Endothelial cell of umbilical vein (primary cell): ENCODE measurements at regions of chr4 and their contacts with region 1.

Region 1: DNA sequence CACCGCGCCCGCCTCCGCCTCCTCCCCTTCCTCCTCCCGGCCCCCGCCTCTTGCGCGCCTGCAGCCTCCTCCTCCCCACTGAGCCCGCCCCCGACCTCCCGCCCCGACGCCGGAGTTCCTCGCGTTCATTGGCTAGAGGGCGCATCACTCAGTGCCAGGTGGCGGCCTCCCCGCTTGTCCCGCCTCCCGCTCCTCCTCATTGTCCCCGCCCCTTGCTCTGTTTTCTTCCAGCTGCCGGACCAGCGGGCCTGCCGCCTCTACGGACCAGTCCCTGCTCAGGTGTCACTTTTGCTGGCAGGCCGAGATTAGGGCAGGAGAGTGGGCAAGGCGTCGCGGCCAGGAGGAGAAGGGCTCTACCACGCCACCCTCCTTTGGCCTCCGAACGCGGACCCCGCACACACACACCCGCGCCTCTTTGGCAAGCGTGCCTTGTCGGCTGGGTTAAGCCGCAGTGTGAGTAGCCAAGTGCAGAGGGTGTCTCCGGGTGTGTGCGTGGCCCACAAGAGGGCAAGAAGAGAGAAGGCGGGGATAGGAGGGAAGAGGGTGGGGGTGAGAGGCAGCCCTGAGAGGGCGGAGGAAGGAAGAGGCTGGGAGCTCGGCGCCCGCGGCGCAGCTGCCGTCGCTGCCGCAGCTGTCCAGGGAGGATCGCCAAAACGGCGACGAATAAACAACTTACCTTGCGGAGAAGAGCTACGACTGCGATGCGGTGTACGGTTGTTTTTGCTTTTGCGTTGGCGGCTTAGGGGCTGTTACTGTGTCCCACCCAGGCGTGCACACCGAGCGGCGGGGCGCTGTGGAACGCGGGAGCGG is 436 bp upstream of the PPP3CA start:
- DNase-seq: peak; percentile 98
- H3K4me3 ChIP-seq: peak overlapping the region; percentile 52 to 97 (median 54)
- H3K27ac ChIP-seq: peak overlapping the region; percentile 70
- H3K4me1 ChIP-seq: peaks cover 15% of the 10 kb centered on the region
- H3K27me3 ChIP-seq: no peaks in the 10 kb centered on the region
- CTCF ChIP-seq: peak in 1 of 2 donors; percentile 12
- POLR2A ChIP-seq: no peak

Region 2: GRCh38 chr4:99563310-99564186 is 1784.2 kb before region 1 on chr4 and contains the start of gene TRMT10A:
- CTCF ChIA-PET with region 1: no interaction called
- POLR2A ChIA-PET with region 1: no interaction called
- dilution Hi-C with region 1: no loop called
- intact Hi-C with region 1: loop called (anchors 5 kb)
- DNase-seq: peak; percentile 98
- H3K4me3 ChIP-seq: peak within 1 kb of the TSS; percentile 38 to 85 (median 73)
- H3K27ac ChIP-seq: peak within 1 kb of the TSS; percentile 90
- H3K4me1 ChIP-seq: peaks cover 6% of the 10 kb centered on the region
- H3K27me3 ChIP-seq: peaks cover 3 to 11% of the 10 kb centered on the region in 2 experiments
- CTCF ChIP-seq: no peak
- POLR2A ChIP-seq: no peak
- total RNA-seq, gene TRMT10A: 6.5 and 8.4 TPM in 2 replicates

Region 3: GRCh38 chr4:99986792-99987191 is 1361.0 kb before region 1 on chr4:
- CTCF ChIA-PET with region 1: no interaction called
- POLR2A ChIA-PET with region 1: no interaction called
- dilution Hi-C with region 1: no loop called
- intact Hi-C with region 1: no loop called
- DNase-seq: no peak
- H3K4me3 ChIP-seq: no peak overlapping the region
- H3K27ac ChIP-seq: no peak overlapping the region
- H3K4me1 ChIP-seq: no peaks in the 10 kb centered on the region
- H3K27me3 ChIP-seq: no peaks in the 10 kb centered on the region
- CTCF ChIP-seq: no peak
- POLR2A ChIP-seq: no peak

Region 4: DNA sequence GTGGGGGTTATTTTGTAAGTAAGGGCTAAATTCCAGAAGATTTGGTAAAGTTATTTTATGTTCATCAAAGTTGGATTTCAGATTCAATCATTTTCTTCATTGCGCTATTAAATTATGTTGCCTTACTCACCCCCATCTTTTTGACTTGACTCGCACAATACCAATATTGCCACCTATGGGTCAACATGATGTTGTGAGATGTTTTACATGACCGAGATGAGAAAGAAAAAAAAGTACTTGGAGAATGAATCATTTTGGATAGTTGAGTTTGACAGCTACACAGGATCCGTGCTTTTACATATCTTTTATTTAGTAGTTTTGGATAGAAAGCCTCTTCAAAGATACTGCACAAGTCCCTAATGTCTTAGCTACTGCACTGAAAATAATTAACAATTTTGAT is 605.7 kb before region 1 on chr4:
- CTCF ChIA-PET with region 1: no interaction called
- POLR2A ChIA-PET with region 1: no interaction called
- dilution Hi-C with region 1: no loop called
- intact Hi-C with region 1: loop called (anchors 5 kb)
- DNase-seq: peak; percentile 67
- H3K4me3 ChIP-seq: no peak overlapping the region
- H3K27ac ChIP-seq: no peak overlapping the region
- H3K4me1 ChIP-seq: peaks cover 18% of the 10 kb centered on the region
- H3K27me3 ChIP-seq: no peaks in the 10 kb centered on the region
- CTCF ChIP-seq: peak; percentile 45 to 49
- POLR2A ChIP-seq: no peak

Region 5: GRCh38 chr4:101103381-101104142 is 244.2 kb before region 1 on chr4:
- CTCF ChIA-PET with region 1: no interaction called
- POLR2A ChIA-PET with region 1: no interaction called
- dilution Hi-C with region 1: no loop called
- intact Hi-C with region 1: loop called (anchors 2 kb)
- DNase-seq: peak; percentile 87
- H3K4me3 ChIP-seq: no peak overlapping the region
- H3K27ac ChIP-seq: peak overlapping the region; percentile 56
- H3K4me1 ChIP-seq: peaks cover 28% of the 10 kb centered on the region
- H3K27me3 ChIP-seq: no peaks in the 10 kb centered on the region
- CTCF ChIP-seq: no peak
- POLR2A ChIP-seq: no peak

Region 6: DNA sequence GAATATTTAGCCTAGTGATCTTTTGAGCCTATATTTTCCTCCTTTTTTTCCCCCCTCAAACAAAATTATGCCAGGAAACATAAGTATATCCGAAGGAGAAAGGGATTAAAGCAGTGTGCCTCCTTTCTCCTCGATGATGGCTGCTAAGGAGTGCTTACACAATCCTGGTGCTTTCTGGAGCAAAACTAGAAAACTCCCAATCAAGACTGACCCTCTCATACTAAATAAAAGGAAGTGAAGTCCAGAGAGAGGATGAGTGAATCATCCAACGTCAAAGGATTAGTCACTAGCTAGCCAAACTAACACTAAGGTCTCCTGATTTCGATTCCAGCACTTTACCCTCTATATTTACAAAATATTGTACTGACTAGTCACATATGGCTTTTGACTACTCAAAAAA is 147.2 kb before region 1 on chr4:
- CTCF ChIA-PET with region 1: no interaction called
- POLR2A ChIA-PET with region 1: no interaction called
- dilution Hi-C with region 1: no loop called
- intact Hi-C with region 1: loop called (anchors 5 kb)
- DNase-seq: peak; percentile 94
- H3K4me3 ChIP-seq: peak overlapping the region in 1 of 3 experiments; percentile 34
- H3K27ac ChIP-seq: peak overlapping the region; percentile 81
- H3K4me1 ChIP-seq: peaks cover 19% of the 10 kb centered on the region
- H3K27me3 ChIP-seq: no peaks in the 10 kb centered on the region
- CTCF ChIP-seq: no peak
- POLR2A ChIP-seq: no peak

Region 7: GRCh38 chr4:101730291-101731117 is 382.7 kb after region 1 on chr4:
- CTCF ChIA-PET with region 1: interaction called, 3 read pairs
- POLR2A ChIA-PET with region 1: no interaction called
- dilution Hi-C with region 1: no loop called
- intact Hi-C with region 1: loop called (anchors 1 kb)
- DNase-seq: peak; percentile 78
- H3K4me3 ChIP-seq: no peak overlapping the region
- H3K27ac ChIP-seq: no peak overlapping the region
- H3K4me1 ChIP-seq: no peaks in the 10 kb centered on the region
- H3K27me3 ChIP-seq: no peaks in the 10 kb centered on the region
- CTCF ChIP-seq: peak; percentile 58 to 63
- POLR2A ChIP-seq: no peak